A673 (cell line): ENCODE measurements at regions of chr12 and their contacts with region 1.

Region 1: DNA sequence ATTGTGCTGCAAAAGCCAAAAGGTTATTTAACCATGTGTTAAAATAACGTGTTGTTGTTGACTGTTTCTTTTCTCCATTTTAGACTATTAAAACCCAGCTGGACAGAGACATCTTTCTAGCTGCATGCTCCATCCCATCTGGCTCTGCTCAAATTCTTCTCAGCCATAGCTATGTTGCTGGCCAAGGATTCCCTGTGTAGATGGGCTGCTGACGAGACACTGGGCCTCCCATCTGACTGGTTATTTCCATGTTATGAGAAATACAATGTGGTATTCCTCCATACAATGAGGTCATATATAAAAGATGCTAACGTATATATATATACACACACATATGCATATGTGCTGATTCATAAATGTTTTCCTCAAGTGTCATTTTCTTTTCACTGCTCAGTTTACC is 30.1 kb downstream of the MED13L start:
- DNase-seq: no peak
- H3K4me3 ChIP-seq: no peak overlapping the region
- H3K27ac ChIP-seq: no peak overlapping the region
- H3K4me1 ChIP-seq: peaks cover 28% of the 10 kb centered on the region
- H3K27me3 ChIP-seq: no peaks in the 10 kb centered on the region
- CTCF ChIP-seq: no peak

Region 2: GRCh38 chr12:116358893-116359761 is 111.8 kb after region 1 on chr12:
- CTCF ChIA-PET with region 1: no interaction called
- POLR2A ChIA-PET with region 1: interaction called, 14 read pairs
- intact Hi-C with region 1: no loop called
- DNase-seq: peak; percentile 95
- H3K4me3 ChIP-seq: peak overlapping the region; percentile 7
- H3K27ac ChIP-seq: peak overlapping the region; percentile 76
- H3K4me1 ChIP-seq: peaks cover 17% of the 10 kb centered on the region
- H3K27me3 ChIP-seq: no peaks in the 10 kb centered on the region
- CTCF ChIP-seq: no peak